BJ (cell line): ENCODE measurements at regions of chr20 and their contacts with region 1.

Region 1: DNA sequence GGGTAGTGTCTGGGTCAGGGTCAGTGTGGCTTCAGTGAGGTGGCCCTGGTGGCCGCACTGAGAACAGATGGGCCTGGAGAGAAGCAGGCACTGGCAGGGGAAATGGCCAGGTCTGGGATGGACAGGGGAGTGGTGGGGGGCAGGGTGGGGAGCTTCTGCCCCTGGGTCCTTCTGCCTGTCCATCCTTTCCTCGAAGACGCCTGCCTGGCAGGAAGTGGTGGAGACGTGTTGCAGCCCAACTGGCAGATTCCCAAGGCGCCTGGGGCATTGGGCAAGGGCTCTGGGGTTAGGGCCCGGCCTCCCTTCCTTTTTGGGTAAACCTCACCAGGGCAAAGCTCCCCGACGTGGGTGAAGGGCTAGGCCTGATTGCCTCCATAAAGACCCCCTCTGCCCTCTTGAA is 10.4 kb downstream of the SRC start:
- DNase-seq: no peak
- H3K4me3 ChIP-seq: no peak overlapping the region
- H3K27me3 ChIP-seq: no peaks in the 10 kb centered on the region
- CTCF ChIP-seq: no peak

Region 2: DNA sequence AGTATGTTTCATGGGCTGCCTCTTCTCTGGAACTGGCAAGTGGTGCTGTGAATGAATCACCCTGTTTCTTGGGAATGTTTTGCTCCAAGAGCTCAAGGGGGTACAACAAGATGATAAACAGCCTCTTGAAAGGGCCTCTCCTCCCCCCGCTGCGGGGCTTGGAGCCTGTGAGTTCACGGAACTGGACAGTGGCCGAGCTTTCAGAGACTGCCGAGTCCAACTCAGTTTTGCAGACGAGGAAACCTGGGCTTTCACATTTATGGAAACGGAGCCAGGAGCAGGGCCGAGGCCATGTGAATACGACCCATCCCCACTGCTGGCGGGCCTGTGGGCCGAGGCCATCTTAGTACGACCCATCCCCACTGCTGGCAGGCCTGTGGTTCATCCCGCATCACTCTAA is 28.6 kb before region 1 on chr20:
- CTCF ChIA-PET with region 1: no interaction called
- POLR2A ChIA-PET with region 1: interaction called, 21 read pairs
- DNase-seq: peak; percentile 40
- H3K4me3 ChIP-seq: no peak overlapping the region
- H3K27me3 ChIP-seq: no peaks in the 10 kb centered on the region
- CTCF ChIP-seq: no peak

Region 3: GRCh38 chr20:37430788-37431460 is 74.5 kb after region 1 on chr20:
- CTCF ChIA-PET with region 1: no interaction called
- POLR2A ChIA-PET with region 1: no interaction called
- DNase-seq: no peak
- H3K4me3 ChIP-seq: no peak overlapping the region
- H3K27me3 ChIP-seq: peaks cover 17% of the 10 kb centered on the region
- CTCF ChIP-seq: no peak